Endothelial cell of umbilical vein (primary cell): ENCODE measurements at regions of chr2 and their contacts with region 1.

Region 1: GRCh38 chr2:140863713-140864112 is 1267.1 kb downstream of the LRP1B start:
- DNase-seq: peak; percentile 63
- H3K4me3 ChIP-seq: no peak overlapping the region
- H3K27ac ChIP-seq: no peak overlapping the region
- H3K4me1 ChIP-seq: no peaks in the 10 kb centered on the region
- H3K27me3 ChIP-seq: no peaks in the 10 kb centered on the region
- CTCF ChIP-seq: peak; percentile 24 to 41
- POLR2A ChIP-seq: no peak

Region 2: DNA sequence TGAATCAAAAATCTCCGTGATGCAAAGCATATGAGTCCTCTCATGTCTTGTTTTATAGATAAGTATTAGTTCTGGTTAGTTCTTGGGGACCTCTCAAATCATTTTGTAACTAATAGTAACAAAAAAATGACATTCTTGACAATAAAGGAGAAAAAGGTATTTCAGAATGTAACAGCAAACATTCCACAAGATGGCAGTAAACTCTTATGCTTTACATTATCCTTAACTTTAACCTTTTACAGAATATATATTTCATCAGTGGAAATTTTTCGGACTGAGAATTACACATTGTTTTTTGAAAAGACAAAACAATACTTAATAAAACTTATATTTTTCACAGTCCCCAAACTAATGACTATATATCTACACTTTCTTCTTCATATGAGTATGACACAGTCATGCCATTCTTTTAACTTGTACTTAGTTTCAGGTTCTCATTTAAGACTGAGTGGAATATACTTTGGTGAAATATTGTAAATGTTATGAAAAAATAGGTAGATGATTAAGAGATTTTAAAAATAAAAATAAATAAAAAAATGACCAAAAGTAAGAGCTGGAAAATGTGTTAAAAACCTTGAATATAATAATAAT is 1940.6 kb before region 1 on chr2:
- CTCF ChIA-PET with region 1: interaction called, 5 read pairs
- POLR2A ChIA-PET with region 1: no interaction called
- dilution Hi-C with region 1: no loop called
- intact Hi-C with region 1: loop called (anchors 5 kb)
- DNase-seq: peak; percentile 15
- H3K4me3 ChIP-seq: no peak overlapping the region
- H3K27ac ChIP-seq: no peak overlapping the region
- H3K4me1 ChIP-seq: no peaks in the 10 kb centered on the region
- H3K27me3 ChIP-seq: no peaks in the 10 kb centered on the region
- CTCF ChIP-seq: peak; percentile 5 to 11
- POLR2A ChIP-seq: no peak

Region 3: GRCh38 chr2:140085674-140086073 is 778.0 kb before region 1 on chr2:
- CTCF ChIA-PET with region 1: interaction called, 25 read pairs
- POLR2A ChIA-PET with region 1: no interaction called
- dilution Hi-C with region 1: no loop called
- intact Hi-C with region 1: no loop called
- DNase-seq: peak; percentile 1
- H3K4me3 ChIP-seq: no peak overlapping the region
- H3K27ac ChIP-seq: no peak overlapping the region
- H3K4me1 ChIP-seq: no peaks in the 10 kb centered on the region
- H3K27me3 ChIP-seq: no peaks in the 10 kb centered on the region
- CTCF ChIP-seq: no peak
- POLR2A ChIP-seq: no peak

Region 4: DNA sequence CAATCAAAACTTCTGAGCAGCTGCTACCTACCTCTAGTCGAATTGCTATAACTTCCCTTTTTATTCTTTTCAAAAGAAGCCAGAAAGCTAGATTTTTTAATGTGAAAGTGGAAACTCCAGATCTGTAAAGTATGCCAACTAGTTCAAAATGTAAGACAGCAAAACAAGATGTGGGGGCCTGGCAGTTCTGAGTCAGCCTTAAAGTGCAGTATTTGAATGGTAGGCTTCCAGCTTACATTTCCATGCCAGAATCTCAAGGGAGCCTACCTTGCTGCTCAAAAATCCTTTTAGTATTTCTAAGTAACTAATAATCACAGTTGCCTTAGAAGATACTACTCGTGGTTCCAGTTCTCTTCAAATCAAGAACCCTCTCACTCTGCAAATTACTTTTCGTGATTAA is 21.6 kb before region 1 on chr2:
- CTCF ChIA-PET with region 1: interaction called, 10 read pairs
- POLR2A ChIA-PET with region 1: no interaction called
- dilution Hi-C with region 1: no loop called
- intact Hi-C with region 1: no loop called
- DNase-seq: no peak
- H3K4me3 ChIP-seq: no peak overlapping the region
- H3K27ac ChIP-seq: no peak overlapping the region
- H3K4me1 ChIP-seq: no peaks in the 10 kb centered on the region
- H3K27me3 ChIP-seq: no peaks in the 10 kb centered on the region
- CTCF ChIP-seq: no peak
- POLR2A ChIP-seq: no peak

Region 5: GRCh38 chr2:140880573-140880972 is 16.9 kb after region 1 on chr2:
- CTCF ChIA-PET with region 1: interaction called, 18 read pairs
- POLR2A ChIA-PET with region 1: no interaction called
- dilution Hi-C with region 1: no loop called
- intact Hi-C with region 1: no loop called
- DNase-seq: peak; percentile 42
- H3K4me3 ChIP-seq: no peak overlapping the region
- H3K27ac ChIP-seq: no peak overlapping the region
- H3K4me1 ChIP-seq: no peaks in the 10 kb centered on the region
- H3K27me3 ChIP-seq: no peaks in the 10 kb centered on the region
- CTCF ChIP-seq: no peak
- POLR2A ChIP-seq: no peak

Region 6: DNA sequence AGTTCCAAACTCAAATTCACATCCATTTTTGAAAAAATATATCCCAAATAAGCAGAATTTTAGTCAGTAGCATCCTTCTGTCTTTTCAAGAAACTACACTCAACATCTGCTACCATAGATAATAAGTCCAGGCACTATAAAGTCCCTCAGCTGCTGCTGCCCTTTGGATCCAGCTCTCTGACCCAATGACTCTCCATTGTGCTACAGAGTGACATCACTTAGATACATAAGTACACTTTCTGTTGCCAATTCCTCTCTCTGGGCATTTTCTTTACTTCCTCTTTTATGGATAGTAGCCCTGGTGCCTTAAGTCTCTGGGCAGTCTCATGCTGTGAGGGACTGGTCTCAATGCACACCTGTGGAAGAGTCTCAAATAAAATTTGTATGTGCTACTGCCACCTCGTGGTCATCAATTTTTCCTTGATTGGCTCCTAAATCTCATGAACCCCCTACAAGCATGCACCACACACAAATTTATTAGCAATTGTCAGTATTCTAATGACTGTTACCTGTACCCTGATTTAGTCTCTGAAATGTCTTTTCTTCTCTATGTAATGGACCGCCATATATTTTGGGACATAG is 1047.9 kb after region 1 on chr2:
- CTCF ChIA-PET with region 1: interaction called, 14 read pairs
- POLR2A ChIA-PET with region 1: no interaction called
- dilution Hi-C with region 1: no loop called
- intact Hi-C with region 1: loop called (anchors 2 kb)
- DNase-seq: peak; percentile 40
- H3K4me3 ChIP-seq: no peak overlapping the region
- H3K27ac ChIP-seq: no peak overlapping the region
- H3K4me1 ChIP-seq: no peaks in the 10 kb centered on the region
- H3K27me3 ChIP-seq: no peaks in the 10 kb centered on the region
- CTCF ChIP-seq: peak; percentile 26 to 28
- POLR2A ChIP-seq: no peak